ENCODE measurements at regions of chr4 and their contacts with region 1.

Region 1: GRCh38 chr4:94486372-94486801 is 34.6 kb downstream of the PDLIM5 start:
- DNase-seq: peak; percentile 82
- H3K4me3 ChIP-seq: no peak overlapping the region
- H3K27ac ChIP-seq: peak overlapping the region; percentile 50
- H3K4me1 ChIP-seq: peaks cover 65% of the 10 kb centered on the region
- H3K27me3 ChIP-seq: no peaks in the 10 kb centered on the region
- CTCF ChIP-seq: no peak
- POLR2A ChIP-seq: no peak

Region 2: GRCh38 chr4:94412658-94413038 is 73.7 kb before region 1 on chr4:
- CTCF ChIA-PET with region 1: interaction called, 8 read pairs
- POLR2A ChIA-PET with region 1: no interaction called
- dilution Hi-C with region 1: no loop called
- intact Hi-C with region 1: loop called (anchors 2 kb)
- DNase-seq: peak; percentile 95
- H3K4me3 ChIP-seq: peak overlapping the region in 1 of 3 experiments; percentile 65
- H3K27ac ChIP-seq: peak overlapping the region; percentile 65
- H3K4me1 ChIP-seq: peaks cover 33% of the 10 kb centered on the region
- H3K27me3 ChIP-seq: no peaks in the 10 kb centered on the region
- CTCF ChIP-seq: no peak
- POLR2A ChIP-seq: no peak

Region 3: DNA sequence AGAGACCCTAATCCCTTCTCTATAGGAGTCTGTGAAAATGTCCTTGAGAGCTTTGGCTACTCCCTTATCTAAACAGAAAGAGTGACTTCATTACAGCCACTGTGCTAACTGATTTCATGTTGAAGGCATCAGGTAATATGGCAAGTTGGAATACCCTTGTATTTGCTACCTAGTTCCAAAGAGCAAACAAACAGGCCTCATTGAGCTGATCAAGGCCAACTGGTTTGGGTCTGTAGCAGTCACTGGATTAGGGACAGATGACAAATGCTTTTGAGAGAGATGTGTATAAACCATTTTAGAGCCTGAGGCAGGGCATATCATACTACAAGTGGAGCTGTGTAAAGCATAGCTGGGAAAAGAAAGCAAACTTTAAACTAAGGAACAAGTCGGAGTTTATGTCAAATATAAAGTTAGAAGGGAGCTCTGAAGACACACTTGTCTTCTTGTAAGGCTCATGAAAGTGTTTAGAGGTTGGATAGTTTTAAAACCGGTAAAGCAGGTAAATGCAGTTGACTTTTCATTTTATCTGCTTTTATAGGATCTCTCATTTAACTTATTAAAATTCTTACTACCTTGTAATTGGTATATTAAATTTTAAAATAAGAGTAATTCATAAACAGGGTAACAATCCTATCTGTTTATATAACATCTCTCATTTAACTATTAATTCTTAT is 57.4 kb before region 1 on chr4:
- CTCF ChIA-PET with region 1: no interaction called
- POLR2A ChIA-PET with region 1: no interaction called
- dilution Hi-C with region 1: no loop called
- intact Hi-C with region 1: no loop called
- DNase-seq: no peak
- H3K4me3 ChIP-seq: no peak overlapping the region
- H3K27ac ChIP-seq: no peak overlapping the region
- H3K4me1 ChIP-seq: no peaks in the 10 kb centered on the region
- H3K27me3 ChIP-seq: no peaks in the 10 kb centered on the region
- CTCF ChIP-seq: no peak
- POLR2A ChIP-seq: no peak

Region 4: DNA sequence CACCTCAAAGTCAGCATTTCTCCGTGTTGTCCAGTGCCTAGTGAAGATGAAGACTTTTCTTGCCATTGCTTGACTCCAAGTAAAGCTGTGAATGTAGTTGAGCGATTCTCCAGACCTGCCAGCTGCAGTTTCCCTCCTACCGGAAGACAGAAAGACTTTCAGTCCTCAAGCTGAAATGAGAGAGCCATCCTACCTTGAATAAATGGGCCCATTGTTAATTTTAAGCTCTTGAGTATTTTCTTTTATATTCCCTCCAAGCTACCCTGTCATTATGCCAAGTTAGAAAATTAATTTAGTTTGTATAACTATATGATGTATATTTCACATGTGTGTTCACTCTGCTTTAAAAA is 26.6 kb before region 1 on chr4:
- CTCF ChIA-PET with region 1: no interaction called
- POLR2A ChIA-PET with region 1: no interaction called
- dilution Hi-C with region 1: no loop called
- intact Hi-C with region 1: loop called (anchors 2 kb)
- DNase-seq: no peak
- H3K4me3 ChIP-seq: no peak overlapping the region
- H3K27ac ChIP-seq: no peak overlapping the region
- H3K4me1 ChIP-seq: peaks cover 40% of the 10 kb centered on the region
- H3K27me3 ChIP-seq: no peaks in the 10 kb centered on the region
- CTCF ChIP-seq: no peak
- POLR2A ChIP-seq: no peak

Region 5: GRCh38 chr4:94472056-94472824 is 14.1 kb before region 1 on chr4:
- CTCF ChIA-PET with region 1: interaction called, 5 read pairs
- POLR2A ChIA-PET with region 1: no interaction called
- dilution Hi-C with region 1: no loop called
- intact Hi-C with region 1: loop called (anchors 1 kb)
- DNase-seq: peak; percentile 85
- H3K4me3 ChIP-seq: no peak overlapping the region
- H3K27ac ChIP-seq: peak overlapping the region; percentile 35
- H3K4me1 ChIP-seq: peaks cover 30% of the 10 kb centered on the region
- H3K27me3 ChIP-seq: no peaks in the 10 kb centered on the region
- CTCF ChIP-seq: no peak
- POLR2A ChIP-seq: no peak